ENCODE measurements at regions of chr15 and their contacts with region 1.

Region 1: DNA sequence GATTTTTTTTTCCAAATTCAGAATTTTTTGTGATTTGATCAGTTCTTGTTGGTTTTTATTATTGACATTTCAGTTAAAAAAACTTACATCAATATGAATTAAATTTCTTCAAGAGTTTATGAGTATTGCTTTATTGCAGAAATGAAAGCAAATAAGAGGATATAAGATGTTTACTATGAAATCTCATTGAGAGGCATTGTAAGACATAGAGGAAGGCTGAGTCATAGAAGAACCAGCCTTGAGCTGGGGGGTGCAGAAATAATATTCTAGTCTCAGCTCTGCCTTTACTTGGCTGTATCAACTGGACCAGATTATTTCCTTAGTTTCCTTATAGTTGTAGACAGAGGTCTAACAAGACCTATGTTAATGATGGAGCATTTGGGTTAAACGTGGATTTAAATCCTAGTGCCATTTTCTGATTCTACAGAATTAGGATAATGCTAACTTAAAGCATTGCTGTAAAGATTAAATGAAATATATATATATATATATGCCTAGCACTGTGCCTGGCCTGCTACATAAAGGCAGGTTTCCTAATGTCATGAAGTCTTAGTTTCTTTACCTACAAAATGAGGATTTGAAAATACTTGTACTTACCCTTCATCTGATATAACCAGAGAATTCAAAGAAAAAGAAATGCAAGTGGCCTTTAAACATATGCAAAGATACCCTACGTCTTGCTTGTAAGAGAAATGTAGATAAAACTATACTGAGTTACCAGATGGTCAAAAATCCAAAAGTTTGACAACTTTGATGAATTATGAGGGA is 7.3 kb downstream of the FAM98B start:
- DNase-seq: no peak
- ATAC-seq: peak; percentile 85
- H3K4me3 Mint-ChIP-seq: no peak overlapping the region
- H3K27ac Mint-ChIP-seq: no peak overlapping the region
- H3K4me1 Mint-ChIP-seq: peaks cover 36% of the 10 kb centered on the region
- H3K27me3 Mint-ChIP-seq: no peaks in the 10 kb centered on the region
- CTCF ChIP-seq: no peak

Region 2: GRCh38 chr15:38557921-38558320 is 96.7 kb after region 1 on chr15:
- CTCF ChIA-PET with region 1: no interaction called
- POLR2A ChIA-PET with region 1: no interaction called
- intact Hi-C with region 1: no loop called
- DNase-seq: no peak
- ATAC-seq: no peak
- H3K4me3 Mint-ChIP-seq: peak overlapping the region; percentile 24
- H3K27ac Mint-ChIP-seq: no peak overlapping the region
- H3K4me1 Mint-ChIP-seq: peaks cover 93% of the 10 kb centered on the region
- H3K27me3 Mint-ChIP-seq: no peaks in the 10 kb centered on the region
- CTCF ChIP-seq: no peak

Region 3: GRCh38 chr15:40190591-40190990 is 1729.3 kb after region 1 on chr15:
- CTCF ChIA-PET with region 1: no interaction called
- POLR2A ChIA-PET with region 1: no interaction called
- intact Hi-C with region 1: loop called (anchors 10 kb)
- DNase-seq: no peak
- ATAC-seq: no peak
- H3K4me3 Mint-ChIP-seq: no peak overlapping the region
- H3K27ac Mint-ChIP-seq: no peak overlapping the region
- H3K4me1 Mint-ChIP-seq: peaks cover 5% of the 10 kb centered on the region
- H3K27me3 Mint-ChIP-seq: no peaks in the 10 kb centered on the region
- CTCF ChIP-seq: no peak

Measured in activated B cell treated with CpG ODN at 0.5 μM for 24 hours (primary cell).